ENCODE measurements at regions of chr1 and their contacts with region 1.

Region 1: GRCh38 chr1:31447198-31447597 is 34.2 kb downstream of the SERINC2 start:
- DNase-seq: no peak
- ATAC-seq: no peak
- H3K4me3 ChIP-seq: no peak overlapping the region
- H3K27ac ChIP-seq: no peak overlapping the region
- H3K4me1 ChIP-seq: no peaks in the 10 kb centered on the region
- H3K27me3 ChIP-seq: peaks cover 23% of the 10 kb centered on the region
- CTCF ChIP-seq: no peak
- POLR2A ChIP-seq: no peak
- RAD21 ChIP-seq: no peak

Region 2: DNA sequence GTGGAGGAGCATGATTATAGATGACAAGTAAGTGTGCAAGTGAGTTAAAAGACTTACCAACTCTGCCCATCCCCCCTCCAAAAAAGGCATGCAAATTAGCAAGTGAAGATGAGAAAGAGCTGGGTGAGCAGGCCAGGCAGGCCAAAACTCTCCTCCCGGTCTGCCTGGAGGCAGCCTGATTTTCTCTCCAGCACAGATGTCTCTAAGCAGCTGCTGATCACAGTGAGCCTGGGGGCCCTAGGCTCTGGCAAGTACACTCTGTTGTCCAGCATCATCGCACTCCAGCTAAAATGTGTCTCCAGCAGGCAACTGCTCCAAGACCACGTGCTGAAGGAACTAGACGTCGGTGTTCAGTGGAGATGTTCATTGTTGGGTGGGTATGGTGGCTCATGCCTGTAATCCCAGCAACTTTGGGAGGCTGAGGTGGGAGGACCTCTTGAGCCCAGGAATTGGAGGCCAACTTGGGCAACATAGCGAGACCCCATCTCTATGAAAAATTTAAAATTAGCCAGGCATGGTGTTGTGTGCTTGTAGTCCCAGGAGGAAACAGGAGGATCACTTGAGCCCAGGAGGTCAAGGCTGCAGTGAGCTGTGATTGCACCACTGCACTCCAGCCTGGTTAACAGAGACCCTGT is 325.0 kb before region 1 on chr1:
- CTCF ChIA-PET with region 1: no interaction called
- POLR2A ChIA-PET with region 1: no interaction called
- dilution Hi-C with region 1: no loop called
- in situ Hi-C with region 1: no loop called
- intact Hi-C with region 1: no loop called
- DNase-seq: no peak
- ATAC-seq: no peak; the same call in 1 of the 2 replicates
- H3K4me3 ChIP-seq: no peak overlapping the region
- H3K27ac ChIP-seq: no peak overlapping the region
- H3K4me1 ChIP-seq: peaks cover 2% of the 10 kb centered on the region; the same call in 1 of the 2 replicates
- H3K27me3 ChIP-seq: peaks cover 6% of the 10 kb centered on the region
- CTCF ChIP-seq: no peak
- POLR2A ChIP-seq: no peak
- RAD21 ChIP-seq: no peak

Region 3: DNA sequence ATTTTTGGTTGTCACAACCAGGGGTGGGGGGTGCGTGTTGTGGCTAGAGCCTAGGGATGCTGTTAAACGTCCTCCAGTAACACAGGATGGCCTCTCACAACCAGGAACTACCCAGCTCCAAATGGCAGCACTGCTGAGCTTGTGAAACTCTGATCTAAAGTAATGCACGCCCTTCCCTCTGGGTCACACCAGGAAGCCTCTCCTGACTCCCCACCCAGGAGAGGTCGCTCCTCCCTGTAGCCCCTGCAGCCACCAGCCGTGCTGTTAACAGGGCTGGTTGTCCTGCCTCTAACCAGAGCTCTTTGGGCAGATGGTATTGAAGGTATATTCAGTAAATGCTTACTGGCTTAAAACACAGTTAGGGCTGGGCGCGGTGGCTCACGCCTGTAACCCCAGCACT is 280.7 kb before region 1 on chr1:
- CTCF ChIA-PET with region 1: no interaction called
- POLR2A ChIA-PET with region 1: interaction called, 12 read pairs
- dilution Hi-C with region 1: no loop called
- in situ Hi-C with region 1: no loop called
- intact Hi-C with region 1: no loop called
- DNase-seq: no peak
- ATAC-seq: no peak
- H3K4me3 ChIP-seq: no peak overlapping the region
- H3K27ac ChIP-seq: no peak overlapping the region
- H3K4me1 ChIP-seq: peaks cover 2% of the 10 kb centered on the region; the same call in 1 of the 2 replicates
- H3K27me3 ChIP-seq: no peaks in the 10 kb centered on the region; the same call in 1 of the 2 replicates
- CTCF ChIP-seq: no peak
- POLR2A ChIP-seq: no peak
- RAD21 ChIP-seq: no peak

Region 4: DNA sequence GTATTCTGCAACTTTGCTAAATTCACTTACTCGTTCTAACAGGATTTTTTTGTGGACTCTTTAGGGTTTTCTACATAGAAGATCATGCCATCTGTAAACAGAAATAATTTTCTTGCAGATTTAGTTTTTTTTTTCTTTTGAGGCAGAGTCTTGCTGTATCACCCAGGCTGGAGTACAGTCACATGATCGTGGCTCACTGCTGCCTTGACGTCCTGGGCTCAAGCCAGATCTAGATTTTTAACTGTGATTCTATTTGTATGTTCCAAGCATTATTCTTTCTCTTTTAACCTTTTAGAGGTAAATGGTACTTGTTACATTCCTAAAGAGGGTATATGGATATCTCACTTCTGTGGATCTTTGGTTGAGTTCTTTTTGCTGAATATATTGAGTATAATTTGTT is 92.9 kb before region 1 on chr1:
- CTCF ChIA-PET with region 1: no interaction called
- POLR2A ChIA-PET with region 1: no interaction called
- dilution Hi-C with region 1: no loop called
- in situ Hi-C with region 1: no loop called
- intact Hi-C with region 1: no loop called
- DNase-seq: peak; percentile 44
- ATAC-seq: peak; percentile 27; the same call in 1 of the 2 replicates
- H3K4me3 ChIP-seq: no peak overlapping the region
- H3K27ac ChIP-seq: no peak overlapping the region
- H3K4me1 ChIP-seq: no peaks in the 10 kb centered on the region
- H3K27me3 ChIP-seq: no peaks in the 10 kb centered on the region
- CTCF ChIP-seq: no peak
- POLR2A ChIP-seq: no peak
- RAD21 ChIP-seq: no peak

Region 5: DNA sequence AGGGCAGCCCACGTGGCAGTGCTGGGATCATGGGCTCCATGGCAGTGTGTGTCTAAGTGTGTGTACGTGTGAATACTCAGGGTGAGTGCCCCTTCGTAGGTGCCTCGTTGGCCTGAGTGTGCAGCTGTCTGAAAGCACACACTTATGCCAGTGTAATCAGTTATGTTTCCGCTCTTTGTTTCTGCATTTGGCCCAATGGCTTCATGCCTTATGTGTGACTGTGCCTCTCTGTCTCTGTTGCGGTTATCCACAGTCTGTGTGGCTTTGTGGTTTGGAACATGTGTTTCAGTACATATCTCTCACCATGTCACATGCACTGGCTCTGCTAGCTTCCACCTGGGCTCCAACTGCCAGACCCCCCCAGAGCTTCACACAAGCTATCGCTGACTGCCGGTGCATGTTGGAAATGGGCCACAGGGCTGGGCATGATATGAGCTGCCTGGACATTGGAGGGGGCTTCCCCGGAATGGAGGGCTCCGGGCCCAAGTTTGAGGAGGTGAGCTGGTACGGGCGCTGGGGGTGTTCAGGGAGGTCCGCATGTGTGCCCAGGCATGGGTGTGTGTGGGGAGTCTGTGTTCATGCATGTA is 58.8 kb after region 1 on chr1:
- CTCF ChIA-PET with region 1: no interaction called
- POLR2A ChIA-PET with region 1: no interaction called
- dilution Hi-C with region 1: no loop called
- in situ Hi-C with region 1: no loop called
- intact Hi-C with region 1: no loop called
- DNase-seq: peak; percentile 84
- ATAC-seq: peak; percentile 74
- H3K4me3 ChIP-seq: no peak overlapping the region
- H3K27ac ChIP-seq: no peak overlapping the region
- H3K4me1 ChIP-seq: peaks cover 8% of the 10 kb centered on the region
- H3K27me3 ChIP-seq: peaks cover 65% of the 10 kb centered on the region
- CTCF ChIP-seq: no peak
- POLR2A ChIP-seq: no peak
- RAD21 ChIP-seq: no peak

Measured in IMR-90 (cell line).